MCF 10A (cell line): ENCODE measurements at regions of chr11 and their contacts with region 1.

Region 1: GRCh38 chr11:126115816-126116331 is 53.2 kb upstream of the CDON start:
- DNase-seq: peak; percentile 71
- H3K4me3 Mint-ChIP-seq: no peak overlapping the region
- H3K27ac Mint-ChIP-seq: peak overlapping the region; percentile 14
- H3K4me1 Mint-ChIP-seq: peaks cover 24% of the 10 kb centered on the region
- H3K27me3 Mint-ChIP-seq: no peaks in the 10 kb centered on the region
- CTCF ChIP-seq: no peak

Region 2: GRCh38 chr11:126132319-126132718 is 16.4 kb after region 1 on chr11:
- CTCF ChIA-PET with region 1: interaction called, 9 read pairs
- POLR2A ChIA-PET with region 1: interaction called, 28 read pairs
- intact Hi-C with region 1: no loop called
- DNase-seq: peak; percentile 63
- H3K4me3 Mint-ChIP-seq: peak overlapping the region; percentile 68
- H3K27ac Mint-ChIP-seq: peak overlapping the region; percentile 99
- H3K4me1 Mint-ChIP-seq: peaks cover 17% of the 10 kb centered on the region
- H3K27me3 Mint-ChIP-seq: no peaks in the 10 kb centered on the region
- CTCF ChIP-seq: no peak